CD4-positive, alpha-beta T cell (primary cell): ENCODE measurements at regions of chr10 and their contacts with region 1.

Region 1: GRCh38 chr10:93496322-93497041 is at the start of gene CEP55:
- DNase-seq: peak; percentile 89 to 97 (median 94)
- ATAC-seq: peak; percentile 99
- H3K4me3 ChIP-seq: peak within 1 kb of the TSS; percentile 95
- H3K4me3 Mint-ChIP-seq: peak within 1 kb of the TSS; percentile 95
- H3K27ac ChIP-seq: no peak within 1 kb of the TSS
- H3K27ac Mint-ChIP-seq: peak within 1 kb of the TSS; percentile 46
- H3K4me1 ChIP-seq: peaks cover 17% of the 10 kb centered on the region
- H3K4me1 Mint-ChIP-seq: peaks cover 4% of the 10 kb centered on the region
- H3K27me3 ChIP-seq: no peaks in the 10 kb centered on the region
- H3K27me3 Mint-ChIP-seq: peaks cover 5% of the 10 kb centered on the region
- CTCF ChIP-seq: no peak
- total RNA-seq, gene CEP55: 0.16 to 0.17 TPM

Region 2: DNA sequence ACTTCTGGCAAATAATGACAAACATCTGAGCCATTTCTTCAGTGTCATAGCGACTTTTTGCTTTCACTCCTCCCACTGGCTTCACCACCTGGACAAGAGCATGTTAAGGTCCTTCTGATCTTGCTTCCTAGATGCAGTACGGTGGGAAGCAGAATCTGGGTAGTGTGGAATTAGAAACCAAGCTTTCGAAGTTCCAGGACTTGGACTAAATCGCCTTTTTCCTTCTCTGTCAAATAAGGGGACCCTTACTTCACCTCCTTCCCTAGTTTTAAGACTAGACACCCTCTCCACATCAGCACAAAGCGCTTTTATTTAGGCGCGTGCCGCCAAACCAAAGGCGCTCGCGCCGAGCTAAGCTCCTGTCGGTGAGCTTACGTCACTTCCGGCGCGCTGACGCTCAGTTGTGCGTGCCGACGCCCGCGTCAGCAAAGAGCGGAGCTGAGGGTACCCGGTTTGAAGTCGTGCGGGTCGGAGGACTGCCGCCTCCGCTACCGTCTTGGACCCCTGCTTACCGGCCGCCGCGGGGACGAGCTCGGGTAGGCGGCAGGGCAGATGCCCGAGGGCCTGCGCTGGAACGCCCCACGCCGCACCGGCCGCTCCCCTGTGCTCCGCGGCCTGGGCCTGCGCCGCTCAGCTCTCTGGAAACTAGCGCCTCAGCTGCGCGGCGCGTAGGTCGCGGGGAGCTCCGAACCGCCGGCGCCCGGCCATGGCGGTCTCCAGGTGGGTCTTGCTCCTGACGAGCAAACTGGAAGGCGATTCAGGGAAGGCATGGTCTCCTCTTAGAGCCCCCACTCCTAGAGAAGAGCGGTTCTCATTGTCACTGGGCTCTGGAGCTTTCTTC is 1572.9 kb before region 1 on chr10 and contains the start of gene BTAF1:
- CTCF ChIA-PET with region 1: no interaction called
- POLR2A ChIA-PET with region 1: no interaction called
- intact Hi-C with region 1: loop called in 1 of 2 experiments (anchors 10 kb)
- DNase-seq: peak; percentile 84 to 98 (median 90)
- ATAC-seq: peak; percentile 93
- H3K4me3 ChIP-seq: peak within 1 kb of the TSS; percentile 86
- H3K4me3 Mint-ChIP-seq: peak within 1 kb of the TSS; percentile 98
- H3K27ac ChIP-seq: peak within 1 kb of the TSS; percentile 93 to 97
- H3K27ac Mint-ChIP-seq: peak within 1 kb of the TSS; percentile 98
- H3K4me1 ChIP-seq: peaks cover 20% of the 10 kb centered on the region
- H3K4me1 Mint-ChIP-seq: peaks cover 47% of the 10 kb centered on the region
- H3K27me3 ChIP-seq: peaks cover 4 to 6% of the 10 kb centered on the region in 2 experiments
- H3K27me3 Mint-ChIP-seq: peaks cover under 1% of the 10 kb centered on the region
- CTCF ChIP-seq: no peak
- total RNA-seq, gene BTAF1: 80.8 to 85.8 TPM

Region 3: GRCh38 chr10:92592761-92593618 is 903.5 kb before region 1 on chr10 and contains the start of gene KIF11:
- CTCF ChIA-PET with region 1: no interaction called
- POLR2A ChIA-PET with region 1: no interaction called
- intact Hi-C with region 1: loop called in 1 of 2 experiments (anchors 10 kb)
- DNase-seq: peak; percentile 91 to 98 (median 96)
- ATAC-seq: peak; percentile 81
- H3K4me3 ChIP-seq: peak within 1 kb of the TSS; percentile 75
- H3K4me3 Mint-ChIP-seq: peak within 1 kb of the TSS; percentile 99
- H3K27ac ChIP-seq: peak within 1 kb of the TSS; percentile 84 to 89
- H3K27ac Mint-ChIP-seq: peak within 1 kb of the TSS; percentile 99
- H3K4me1 ChIP-seq: peaks cover 38% of the 10 kb centered on the region
- H3K4me1 Mint-ChIP-seq: peaks cover 29% of the 10 kb centered on the region
- H3K27me3 ChIP-seq: no peaks in the 10 kb centered on the region
- H3K27me3 Mint-ChIP-seq: no peaks in the 10 kb centered on the region
- CTCF ChIP-seq: no peak
- total RNA-seq, gene KIF11: 0.38 to 0.47 TPM

Region 4: GRCh38 chr10:93702211-93703001 is 205.9 kb after region 1 on chr10 and contains the start of gene FRA10AC1:
- CTCF ChIA-PET with region 1: no interaction called
- POLR2A ChIA-PET with region 1: no interaction called
- intact Hi-C with region 1: loop called in 1 of 2 experiments (anchors 2 kb)
- DNase-seq: peak; percentile 80 to 93 (median 86)
- ATAC-seq: peak; percentile 81
- H3K4me3 ChIP-seq: peak within 1 kb of the TSS; percentile 87
- H3K4me3 Mint-ChIP-seq: no peak within 1 kb of the TSS
- H3K27ac ChIP-seq: peak within 1 kb of the TSS; percentile 71 to 77
- H3K27ac Mint-ChIP-seq: no peak within 1 kb of the TSS
- H3K4me1 ChIP-seq: peaks cover 5% of the 10 kb centered on the region
- H3K4me1 Mint-ChIP-seq: peaks cover 19% of the 10 kb centered on the region
- H3K27me3 ChIP-seq: no peaks in the 10 kb centered on the region
- H3K27me3 Mint-ChIP-seq: no peaks in the 10 kb centered on the region
- CTCF ChIP-seq: no peak
- total RNA-seq, gene FRA10AC1: 10.0 to 10.3 TPM

Region 5: DNA sequence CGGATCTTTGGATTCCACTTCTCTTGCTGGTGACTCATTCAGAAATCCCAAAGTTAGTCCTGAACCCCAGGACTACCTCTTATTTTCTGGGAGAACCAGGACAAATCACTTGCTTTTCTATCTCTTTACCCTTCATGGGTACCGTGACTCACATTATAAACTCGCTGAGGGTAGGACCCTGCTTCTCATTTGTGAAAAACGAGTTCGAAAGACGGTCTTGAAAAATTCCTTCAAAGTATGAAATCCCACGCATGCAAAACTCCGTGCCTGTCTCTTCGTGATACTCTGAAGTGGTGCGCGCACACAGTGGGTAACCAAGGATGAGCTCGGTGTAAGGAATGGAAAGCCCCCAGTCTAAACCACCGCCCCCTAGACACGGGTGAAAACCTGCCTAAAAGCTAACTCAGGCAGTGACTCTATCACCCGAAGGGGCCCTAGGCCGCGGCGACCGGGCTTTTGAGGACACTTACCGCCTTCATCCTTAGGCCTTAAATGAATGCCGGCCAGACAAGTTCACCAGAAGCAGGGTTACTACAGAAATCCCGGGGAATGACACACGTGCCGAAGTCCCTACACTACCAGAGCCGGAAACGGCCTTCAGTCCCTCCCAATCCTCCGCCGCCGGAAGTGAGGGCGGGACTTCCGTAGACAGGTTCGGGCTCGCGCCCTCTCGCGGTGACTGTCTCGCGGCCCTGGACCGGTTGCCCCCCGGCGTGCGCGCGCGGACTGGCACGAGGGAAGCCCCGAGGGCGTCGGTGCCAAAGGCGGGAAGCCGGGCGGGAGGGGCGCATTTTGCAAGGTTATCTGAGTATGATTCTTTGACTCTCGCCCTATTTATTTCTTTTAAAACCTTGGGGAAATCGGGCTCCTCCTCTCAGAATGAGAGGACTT is 866.1 kb after region 1 on chr10 and contains the start of gene NOC3L:
- CTCF ChIA-PET with region 1: no interaction called
- POLR2A ChIA-PET with region 1: no interaction called
- intact Hi-C with region 1: loop called in 1 of 2 experiments (anchors 5 kb)
- DNase-seq: peak; percentile 85 to 97 (median 92)
- ATAC-seq: peak; percentile 93
- H3K4me3 ChIP-seq: peak within 1 kb of the TSS; percentile 73
- H3K4me3 Mint-ChIP-seq: peak within 1 kb of the TSS; percentile 93
- H3K27ac ChIP-seq: peak within 1 kb of the TSS; percentile 75 to 87
- H3K27ac Mint-ChIP-seq: peak within 1 kb of the TSS; percentile 94
- H3K4me1 ChIP-seq: peaks cover 17% of the 10 kb centered on the region
- H3K4me1 Mint-ChIP-seq: peaks cover 51% of the 10 kb centered on the region
- H3K27me3 ChIP-seq: peaks cover 0 to 2% of the 10 kb centered on the region in 2 experiments
- H3K27me3 Mint-ChIP-seq: no peaks in the 10 kb centered on the region
- CTCF ChIP-seq: peak; percentile 97
- total RNA-seq, gene NOC3L: 7.1 to 8.0 TPM